HEK293T (cell line): ENCODE measurements at regions of chr2 and their contacts with region 1.

Region 1: GRCh38 chr2:176653479-176654443 is 384.5 kb downstream of the MTX2 start:
- DNase-seq: peak; percentile 73

Region 2: DNA sequence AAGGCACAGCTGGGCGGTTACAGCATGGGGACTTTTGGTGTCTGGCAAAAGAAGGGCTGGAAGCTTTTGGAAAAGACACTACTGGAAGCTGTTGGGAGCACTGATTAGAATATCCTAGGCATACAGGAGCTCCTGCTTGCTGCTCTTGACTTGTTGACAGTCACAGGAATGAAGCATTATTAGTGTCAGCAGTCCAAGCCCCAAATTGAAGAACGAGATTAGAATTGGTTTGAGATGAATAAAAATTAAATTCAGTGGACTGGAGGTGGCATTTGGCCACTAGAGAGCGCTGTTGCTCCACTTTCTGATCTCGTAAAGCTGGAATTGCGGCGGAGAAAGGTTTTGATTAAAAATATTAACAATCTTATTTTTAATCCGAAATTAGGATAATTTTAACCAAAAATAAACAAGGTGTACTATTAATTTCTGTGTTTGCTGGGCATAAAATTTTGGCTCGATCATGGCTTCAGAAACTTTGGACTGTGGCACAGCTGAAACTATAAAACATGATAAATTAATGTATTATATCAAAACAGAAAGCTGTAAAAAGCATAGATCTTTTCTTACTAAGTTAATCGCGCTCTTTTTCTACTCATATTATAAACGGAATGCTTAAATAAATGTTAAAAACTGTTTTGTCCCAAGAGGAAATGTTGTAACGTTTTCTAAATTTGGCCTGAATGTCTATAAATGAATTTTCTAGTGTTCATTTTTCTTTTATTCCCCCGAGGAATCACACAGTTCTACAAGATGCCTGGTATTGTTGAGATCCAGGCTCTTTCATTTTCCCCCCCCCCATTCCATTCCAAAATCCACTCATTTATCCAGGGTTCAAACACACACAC is 526.6 kb before region 1 on chr2:
- CTCF ChIA-PET with region 1: interaction called, 25 read pairs
- POLR2A ChIA-PET with region 1: no interaction called
- DNase-seq: no peak

Region 3: DNA sequence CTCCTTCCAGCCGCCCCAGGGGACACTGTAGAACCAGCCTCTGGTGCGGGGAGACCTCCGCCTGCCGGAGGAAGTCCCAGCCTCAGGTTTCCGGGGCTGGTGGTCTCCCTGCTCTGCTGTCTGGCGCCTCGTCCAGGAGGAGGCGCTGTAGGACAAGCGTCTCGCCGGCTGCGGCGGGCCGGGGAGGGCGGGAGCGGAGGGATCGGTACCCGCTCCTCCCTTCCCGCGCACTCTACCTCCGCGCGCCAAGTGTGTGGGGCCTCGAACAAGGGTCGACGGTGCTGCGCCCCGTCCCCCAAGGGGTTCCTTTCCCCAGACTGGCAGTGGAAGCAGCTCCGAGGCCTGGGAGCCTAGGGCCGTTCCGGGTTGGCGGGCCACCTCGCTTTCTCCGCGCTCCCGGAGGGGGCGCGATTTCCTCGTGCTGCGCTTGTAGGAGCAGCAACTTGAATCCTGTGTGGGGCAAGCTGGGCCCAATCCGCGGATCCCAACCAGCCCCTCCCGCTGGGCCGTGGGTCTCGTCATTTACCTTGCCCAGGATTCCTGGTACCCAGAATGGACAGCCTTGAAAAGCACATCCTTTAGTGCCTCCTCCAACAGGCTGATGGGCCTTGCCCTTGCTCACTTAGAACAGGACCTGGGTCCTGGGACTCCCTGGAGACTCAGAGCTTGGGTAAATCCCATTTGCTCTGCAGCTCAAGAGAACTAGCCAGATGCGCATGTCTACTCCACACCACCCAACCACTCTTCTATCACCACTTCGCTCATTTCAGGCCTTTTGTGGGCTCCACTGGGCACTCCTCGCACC is 513.0 kb before region 1 on chr2:
- CTCF ChIA-PET with region 1: interaction called, 11 read pairs
- POLR2A ChIA-PET with region 1: interaction called, 4 read pairs
- DNase-seq: peak; percentile 85

Region 4: DNA sequence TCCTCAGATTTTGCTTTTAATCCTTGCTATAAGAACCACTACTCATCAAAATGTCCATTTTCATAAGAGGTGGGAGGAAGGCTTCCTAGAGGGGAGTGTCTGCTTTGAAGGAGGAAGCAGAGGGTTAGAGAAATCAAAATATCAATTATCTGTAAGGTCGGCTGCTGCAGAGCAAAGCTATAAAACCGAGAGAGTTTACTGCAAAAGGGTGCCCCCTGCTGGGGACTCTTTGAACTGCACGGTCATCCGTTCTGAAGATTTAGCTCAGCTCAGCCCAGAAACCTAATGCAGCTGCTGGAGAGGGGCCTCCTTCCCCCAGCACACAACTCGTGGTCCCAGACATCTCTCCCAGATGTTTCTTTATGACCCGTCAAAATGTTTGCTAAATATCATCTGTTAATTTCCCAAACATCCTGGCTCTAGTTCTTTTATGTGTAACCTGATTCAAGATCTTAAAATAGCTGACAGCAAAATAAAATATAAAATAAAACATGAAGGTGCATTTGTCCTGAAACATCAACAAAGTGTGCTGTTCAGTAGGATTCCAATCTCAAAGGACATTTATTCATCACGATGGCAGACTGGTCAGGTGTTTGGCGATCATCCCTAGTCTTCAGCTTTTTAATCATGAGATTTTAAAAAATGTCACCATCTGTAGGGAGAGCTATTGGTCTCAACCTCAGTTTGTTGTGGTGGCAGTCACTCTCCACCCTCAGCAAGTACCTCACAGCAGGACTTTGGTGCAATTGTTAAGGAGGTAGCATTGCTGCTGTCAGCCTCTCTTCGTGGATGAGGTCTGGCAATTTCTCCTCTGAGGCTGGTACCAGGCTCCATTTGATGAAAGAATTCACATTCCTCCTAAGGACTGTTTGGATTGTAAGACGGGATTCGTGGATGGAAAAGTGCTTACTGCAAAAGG is 198.6 kb before region 1 on chr2:
- CTCF ChIA-PET with region 1: interaction called, 10 read pairs
- POLR2A ChIA-PET with region 1: no interaction called
- DNase-seq: peak; percentile 71

Region 5: DNA sequence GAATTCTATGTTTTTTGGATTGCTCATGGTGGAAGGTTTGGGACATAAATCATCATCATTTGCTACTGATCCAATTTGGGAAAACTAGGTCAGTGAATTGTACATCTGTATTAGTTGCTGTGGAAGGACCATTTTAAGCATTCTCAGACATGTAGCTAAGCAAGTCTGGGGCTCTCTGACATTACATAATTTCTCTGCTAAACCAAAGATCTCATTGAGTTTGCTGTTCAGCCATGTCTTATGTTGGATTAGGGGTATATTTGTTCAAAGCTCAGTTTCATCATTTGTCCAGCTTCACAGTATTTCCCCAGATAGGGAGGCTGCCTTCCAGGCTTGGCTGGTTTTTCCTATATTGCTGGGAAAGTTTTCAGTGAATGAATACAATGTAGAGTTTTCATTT is 15.2 kb after region 1 on chr2:
- CTCF ChIA-PET with region 1: interaction called, 20 read pairs
- POLR2A ChIA-PET with region 1: interaction called, 3 read pairs
- DNase-seq: no peak

Region 6: GRCh38 chr2:176729706-176730569 is 76.2 kb after region 1 on chr2:
- CTCF ChIA-PET with region 1: no interaction called
- POLR2A ChIA-PET with region 1: no interaction called
- DNase-seq: no peak

Region 7: GRCh38 chr2:176789751-176790150 is 136.0 kb after region 1 on chr2:
- CTCF ChIA-PET with region 1: no interaction called
- POLR2A ChIA-PET with region 1: no interaction called
- DNase-seq: no peak

Region 8: DNA sequence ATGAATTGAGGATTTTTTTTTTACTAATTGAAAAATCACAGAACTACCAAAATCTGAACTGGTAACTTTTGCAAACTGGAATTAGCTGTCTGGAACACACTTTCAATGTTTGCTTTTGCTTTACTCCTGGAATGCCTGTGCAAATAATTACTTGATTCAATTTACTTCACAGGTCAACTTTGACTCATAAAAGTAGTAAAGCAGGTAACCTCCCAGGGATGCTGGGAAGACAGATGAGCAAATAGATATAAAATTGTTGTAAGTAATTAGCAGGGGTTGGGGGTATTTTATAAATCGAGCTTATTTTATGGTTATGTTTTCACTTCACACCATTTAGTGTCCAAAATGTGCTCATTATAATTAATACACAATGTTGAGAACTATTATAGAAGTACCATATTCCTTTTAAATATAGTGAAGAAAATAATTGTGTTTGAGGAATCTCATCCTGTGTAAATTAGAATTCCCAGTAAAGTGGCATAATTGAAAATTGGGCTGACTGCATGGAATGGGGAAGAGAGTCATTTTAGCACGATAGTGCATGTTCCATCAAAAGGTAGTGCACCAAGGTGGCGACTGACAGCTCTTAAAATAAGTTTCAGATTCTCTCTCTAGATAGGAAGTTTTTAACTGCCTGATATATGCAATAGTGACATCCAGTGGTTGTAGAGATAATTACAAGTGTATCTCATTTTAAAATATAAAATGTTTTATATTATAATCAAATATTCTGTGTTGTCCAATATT is 160.7 kb after region 1 on chr2:
- CTCF ChIA-PET with region 1: interaction called, 10 read pairs
- POLR2A ChIA-PET with region 1: no interaction called
- DNase-seq: peak; percentile 22

Region 9: DNA sequence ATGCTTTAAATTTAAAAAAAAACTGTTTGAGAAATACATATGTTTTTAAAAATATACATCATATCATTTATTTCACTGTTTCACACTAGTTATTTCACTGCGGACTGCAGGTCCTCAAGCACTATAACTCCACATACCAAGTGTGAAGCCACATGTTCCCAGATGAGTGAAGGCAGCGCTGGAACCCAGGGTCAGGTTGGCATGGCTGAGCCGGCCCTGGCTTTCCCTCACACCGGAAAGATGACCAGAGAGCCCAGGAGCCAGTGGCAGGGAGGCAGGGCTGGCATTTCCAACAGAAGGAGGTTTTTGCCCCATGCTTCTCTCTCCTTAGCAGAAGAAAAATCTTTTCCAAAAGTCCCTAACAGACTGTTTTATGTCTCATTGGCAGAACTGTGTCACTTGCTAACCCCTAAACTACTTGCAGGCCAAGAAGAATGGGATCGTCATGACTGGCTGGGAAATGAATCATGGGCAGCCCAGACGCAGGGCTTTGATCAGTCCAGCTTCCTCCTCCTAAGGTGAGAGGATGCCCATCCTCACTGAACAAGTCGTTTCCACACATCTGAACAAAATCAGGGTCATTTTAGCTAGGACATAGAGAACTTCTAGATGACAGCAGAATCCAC is 271.3 kb after region 1 on chr2:
- CTCF ChIA-PET with region 1: no interaction called
- POLR2A ChIA-PET with region 1: no interaction called
- DNase-seq: no peak

Region 10: GRCh38 chr2:177148477-177149154 is 494.9 kb after region 1 on chr2:
- CTCF ChIA-PET with region 1: interaction called, 12 read pairs
- POLR2A ChIA-PET with region 1: interaction called, 3 read pairs
- DNase-seq: peak; percentile 80